Activated CD4-positive, alpha-beta memory T cell treated with anti-CD3 and anti-CD28 coated beads, Interleukin-2, amount 10 ng/mL, durations not matched to agents 7 days and 5 days (primary cell): ENCODE measurements at regions of chr6 and their contacts with region 1.

Region 1: DNA sequence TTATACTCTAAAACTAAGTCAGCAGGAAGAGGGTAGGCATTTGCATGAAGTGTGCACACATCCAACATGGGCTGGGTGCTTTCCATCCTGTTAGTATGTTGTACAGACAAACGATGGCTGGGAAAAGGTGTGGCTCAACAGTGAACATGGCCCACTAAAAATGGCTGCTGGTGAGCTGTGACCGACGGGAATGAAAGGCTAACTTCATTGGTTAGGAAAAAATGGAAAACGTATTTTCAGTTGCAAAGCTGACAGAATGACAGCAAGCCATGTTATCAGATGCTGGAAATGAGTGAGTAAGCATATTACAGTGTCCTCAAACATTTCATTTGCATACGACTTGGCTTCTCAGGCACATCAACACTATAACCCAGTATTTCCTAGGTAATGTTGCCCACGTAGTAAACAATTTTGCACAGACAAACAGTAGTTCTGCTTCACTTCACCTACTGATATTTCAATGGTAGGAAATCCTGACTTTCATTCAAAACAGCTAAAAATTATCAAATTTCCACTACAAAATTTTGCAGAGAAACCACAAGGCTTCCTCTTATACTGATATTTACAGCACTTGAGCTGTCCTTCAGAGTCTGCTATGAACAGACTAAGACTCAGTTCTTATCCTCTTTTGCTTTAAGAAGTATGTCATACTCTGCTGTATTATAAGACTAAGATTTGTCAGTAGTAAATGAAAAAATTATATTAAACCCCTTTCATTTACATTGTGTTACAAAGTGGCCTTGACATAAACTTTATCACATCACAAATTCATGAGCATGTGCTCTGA is 98.9 kb downstream of the IRF4 start:
- DNase-seq: peak; percentile 42
- H3K4me3 Mint-ChIP-seq: peak overlapping the region; percentile 45
- H3K27ac Mint-ChIP-seq: peak overlapping the region; percentile 93
- H3K4me1 Mint-ChIP-seq: peaks cover 79% of the 10 kb centered on the region
- H3K27me3 Mint-ChIP-seq: no peaks in the 10 kb centered on the region

Region 2: DNA sequence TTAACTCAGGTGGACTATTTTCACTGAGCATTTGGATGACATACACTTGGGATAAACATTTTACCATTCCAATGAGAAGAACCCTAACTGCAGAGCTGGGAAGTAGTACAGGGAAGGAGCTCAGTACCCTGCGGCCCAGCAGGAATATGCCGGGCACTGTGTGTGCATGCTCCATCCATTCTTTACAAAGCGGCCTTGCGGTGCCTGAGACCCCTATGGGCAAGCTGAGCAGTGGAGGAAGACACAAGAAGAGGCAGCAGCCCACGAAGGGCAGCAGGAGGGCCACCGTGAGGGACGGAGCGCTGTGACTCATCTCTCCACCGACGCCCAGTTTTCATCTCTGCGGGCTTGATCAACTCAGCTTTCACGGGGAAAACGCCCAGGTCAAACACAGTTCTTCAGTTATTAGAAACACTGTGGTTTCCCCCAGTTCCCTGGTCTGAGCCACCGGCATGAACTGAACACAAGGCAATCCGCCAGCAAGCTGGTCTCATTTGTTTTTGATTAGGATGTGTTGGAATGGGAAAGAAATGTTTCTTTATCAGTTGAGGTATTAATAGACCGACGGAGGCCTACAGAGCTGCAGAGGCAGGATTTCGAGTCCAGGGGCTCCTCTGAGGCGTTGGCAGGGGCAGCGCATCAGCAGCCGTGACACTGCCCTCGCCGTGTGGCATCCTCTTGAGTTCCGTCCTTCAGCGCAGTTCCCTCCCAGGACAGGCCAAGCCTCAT is 54.0 kb before region 1 on chr6:
- CTCF ChIA-PET with region 1: interaction called, 6 read pairs
- POLR2A ChIA-PET with region 1: interaction called, 19 read pairs
- DNase-seq: peak; percentile 15
- H3K4me3 Mint-ChIP-seq: no peak overlapping the region
- H3K27ac Mint-ChIP-seq: no peak overlapping the region
- H3K4me1 Mint-ChIP-seq: peaks cover 44% of the 10 kb centered on the region
- H3K27me3 Mint-ChIP-seq: peaks cover 15% of the 10 kb centered on the region

Region 3: GRCh38 chr6:467671-468082 is 22.8 kb before region 1 on chr6:
- CTCF ChIA-PET with region 1: interaction called, 5 read pairs
- POLR2A ChIA-PET with region 1: interaction called, 21 read pairs
- DNase-seq: peak; percentile 46
- H3K4me3 Mint-ChIP-seq: no peak overlapping the region
- H3K27ac Mint-ChIP-seq: no peak overlapping the region
- H3K4me1 Mint-ChIP-seq: peaks cover 43% of the 10 kb centered on the region
- H3K27me3 Mint-ChIP-seq: peaks cover 75% of the 10 kb centered on the region

Region 4: GRCh38 chr6:474453-475185 is 15.8 kb before region 1 on chr6:
- CTCF ChIA-PET with region 1: interaction called, 6 read pairs
- POLR2A ChIA-PET with region 1: interaction called, 24 read pairs
- DNase-seq: peak; percentile 87
- H3K4me3 Mint-ChIP-seq: peak overlapping the region; percentile 46
- H3K27ac Mint-ChIP-seq: peak overlapping the region; percentile 42
- H3K4me1 Mint-ChIP-seq: peaks cover 60% of the 10 kb centered on the region
- H3K27me3 Mint-ChIP-seq: peaks cover 43% of the 10 kb centered on the region